ENCODE measurements at regions of chr2 and their contacts with region 1.

Region 1: GRCh38 chr2:180573958-180574357 is 406.4 kb upstream of the UBE2E3 start:
- DNase-seq: peak; percentile 37
- ATAC-seq: no peak
- H3K4me3 ChIP-seq: no peak overlapping the region
- H3K27ac ChIP-seq: no peak overlapping the region
- H3K4me1 ChIP-seq: no peaks in the 10 kb centered on the region
- H3K27me3 ChIP-seq: no peaks in the 10 kb centered on the region
- CTCF ChIP-seq: no peak
- POLR2A ChIP-seq: no peak
- RAD21 ChIP-seq: no peak

Region 2: GRCh38 chr2:180472133-180472532 is 101.8 kb before region 1 on chr2:
- CTCF ChIA-PET with region 1: no interaction called
- POLR2A ChIA-PET with region 1: no interaction called
- dilution Hi-C with region 1: no loop called
- in situ Hi-C with region 1: no loop called
- intact Hi-C with region 1: loop called (anchors 5 kb)
- DNase-seq: peak; percentile 70
- ATAC-seq: peak; percentile 89
- H3K4me3 ChIP-seq: no peak overlapping the region
- H3K27ac ChIP-seq: no peak overlapping the region; the same call in 1 of the 2 replicates
- H3K4me1 ChIP-seq: peaks cover 3% of the 10 kb centered on the region; the same call in 1 of the 2 replicates
- H3K27me3 ChIP-seq: no peaks in the 10 kb centered on the region
- CTCF ChIP-seq: no peak
- POLR2A ChIP-seq: no peak
- RAD21 ChIP-seq: no peak

Region 3: DNA sequence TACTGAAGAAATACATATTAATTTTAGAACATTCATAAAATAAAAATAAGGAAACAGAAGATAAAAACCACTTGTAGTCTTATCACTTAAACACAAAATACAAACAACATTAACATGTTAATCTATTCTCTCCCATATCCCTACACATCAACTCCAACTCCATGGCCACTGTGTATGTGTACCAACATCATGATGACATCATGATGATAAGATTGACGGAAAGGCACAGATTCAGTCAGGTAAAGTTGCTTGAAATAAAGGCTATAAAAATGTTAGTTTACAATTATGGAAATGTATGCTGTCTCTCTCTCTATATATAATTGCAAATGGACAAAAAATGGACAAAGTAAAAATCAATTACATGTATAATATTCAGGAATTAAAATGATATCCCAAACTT is 18.0 kb after region 1 on chr2:
- CTCF ChIA-PET with region 1: no interaction called
- POLR2A ChIA-PET with region 1: no interaction called
- dilution Hi-C with region 1: no loop called
- in situ Hi-C with region 1: no loop called
- intact Hi-C with region 1: no loop called
- DNase-seq: no peak
- ATAC-seq: no peak
- H3K4me3 ChIP-seq: no peak overlapping the region
- H3K27ac ChIP-seq: no peak overlapping the region
- H3K4me1 ChIP-seq: no peaks in the 10 kb centered on the region
- H3K27me3 ChIP-seq: no peaks in the 10 kb centered on the region
- CTCF ChIP-seq: no peak
- POLR2A ChIP-seq: no peak
- RAD21 ChIP-seq: no peak